ENCODE measurements at regions of chr17 and their contacts with region 1.

Region 1: GRCh38 chr17:28940675-28941074 is 10.6 kb downstream of the PHF12 start:
- DNase-seq: no peak
- H3K4me3 ChIP-seq: no peak overlapping the region
- CTCF ChIP-seq: no peak

Region 2: DNA sequence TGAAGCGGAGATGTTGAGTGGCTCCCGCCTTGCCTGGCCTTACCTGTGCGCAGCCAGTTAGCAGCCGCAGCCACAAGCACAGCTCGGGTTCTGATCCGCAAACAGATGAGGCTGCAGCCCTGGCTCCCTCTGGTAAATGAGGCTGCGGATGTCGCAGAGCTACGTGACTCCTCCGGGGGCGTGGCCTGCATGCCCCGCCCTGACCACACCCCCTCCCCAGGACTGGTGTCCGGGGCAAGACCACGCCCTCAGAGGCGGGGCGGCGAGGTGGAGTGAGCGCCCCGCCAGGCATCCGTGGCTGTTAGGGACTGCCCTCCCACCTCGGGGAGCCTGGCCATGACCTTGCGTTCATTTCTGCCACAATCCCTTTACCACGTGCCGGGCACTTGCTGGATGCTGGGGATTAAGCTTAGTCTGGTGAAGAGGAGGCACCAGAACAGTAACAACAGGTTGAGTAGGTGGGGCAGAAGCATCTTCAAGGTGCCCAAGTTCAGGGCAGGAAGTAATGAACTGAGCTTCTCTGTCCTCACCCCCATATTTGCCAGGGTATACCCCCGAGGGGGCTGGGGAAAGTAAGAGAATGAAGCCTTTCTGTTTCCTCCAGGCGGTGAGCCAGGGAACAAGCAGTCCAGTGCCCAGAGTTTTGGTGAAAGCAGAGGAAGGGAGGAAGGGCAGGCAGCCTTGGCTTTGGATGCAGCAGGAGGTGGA is 363.8 kb before region 1 on chr17 and contains the start of gene ALDOC:
- CTCF ChIA-PET with region 1: no interaction called
- POLR2A ChIA-PET with region 1: no interaction called
- DNase-seq: peak; percentile 51
- H3K4me3 ChIP-seq: peak within 1 kb of the TSS; percentile 55
- CTCF ChIP-seq: no peak

Region 3: GRCh38 chr17:28889996-28890395 is 50.7 kb before region 1 on chr17:
- CTCF ChIA-PET with region 1: no interaction called
- POLR2A ChIA-PET with region 1: no interaction called
- DNase-seq: no peak
- H3K4me3 ChIP-seq: no peak overlapping the region
- CTCF ChIP-seq: no peak

Region 4: DNA sequence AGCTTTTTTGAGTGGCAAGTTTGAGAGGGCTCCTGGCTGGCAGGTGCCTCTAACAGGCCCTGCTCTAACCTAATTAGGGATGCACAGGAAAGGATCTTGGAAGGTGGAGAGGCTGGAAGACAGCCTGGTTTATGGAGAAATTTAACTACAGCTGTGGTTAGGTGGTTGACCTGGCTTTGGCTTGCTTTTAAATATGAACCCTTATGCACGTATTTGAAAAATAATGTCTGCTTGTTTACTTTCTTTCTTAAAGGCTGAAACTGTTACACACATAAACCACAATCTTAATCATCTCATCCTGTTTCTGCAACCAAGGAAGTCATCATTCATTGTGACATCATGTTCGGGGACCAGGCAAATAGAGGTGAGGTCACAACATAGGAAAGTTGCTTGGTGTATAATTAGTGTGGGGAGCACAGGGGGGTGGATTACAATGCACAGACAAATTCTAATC is 14.7 kb before region 1 on chr17:
- CTCF ChIA-PET with region 1: interaction called, 11 read pairs
- POLR2A ChIA-PET with region 1: interaction called, 3 read pairs
- DNase-seq: peak; percentile 49
- H3K4me3 ChIP-seq: no peak overlapping the region
- CTCF ChIP-seq: no peak

Measured in AG04449 (cell line).